Cardiac septum (tissue), 1 donor: ENCODE measurements at regions of chr1 and their contacts with region 1.

Region 1: GRCh38 chr1:99533909-99534637 is 111.8 kb upstream of the PALMD start:
- DNase-seq: no peak

Region 2: DNA sequence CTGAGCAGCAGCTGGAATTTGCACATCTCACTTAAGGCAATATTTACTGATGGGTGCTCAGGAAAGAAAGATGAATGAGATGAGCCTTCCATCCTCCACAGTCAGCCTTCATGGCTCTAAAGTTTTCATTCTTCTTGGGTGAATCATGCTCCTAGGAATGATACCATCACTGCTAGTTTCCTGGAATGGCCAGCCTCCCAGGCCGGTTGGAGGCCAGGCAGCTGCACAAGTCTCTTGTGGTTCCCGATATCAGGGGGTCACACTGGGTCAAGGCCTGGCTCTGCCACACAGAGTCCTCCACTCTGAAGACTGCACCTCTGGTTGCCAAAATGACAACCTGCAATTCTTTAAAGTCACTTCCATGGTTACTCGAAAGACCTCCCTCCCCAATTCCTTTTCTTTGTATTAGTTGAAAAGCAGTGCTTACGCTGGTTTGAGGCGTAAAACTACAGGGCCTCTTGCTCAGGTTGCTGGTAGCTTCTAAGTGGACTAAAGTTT is 65.7 kb after region 1 on chr1:
- intact Hi-C with region 1: loop called (anchors 2 kb)
- DNase-seq: no peak

Region 3: GRCh38 chr1:99685516-99686180 is 151.6 kb after region 1 on chr1:
- intact Hi-C with region 1: loop called (anchors 10 kb)
- DNase-seq: peak; percentile 84